H1 (cell line): ENCODE measurements at regions of chr19 and their contacts with region 1.

Region 1: GRCh38 chr19:18878858-18879578 is 16.9 kb downstream of the CERS1 start:
- DNase-seq: no peak
- H3K4me3 ChIP-seq: no peak overlapping the region
- H3K27ac ChIP-seq: no peak overlapping the region
- H3K4me1 ChIP-seq: no peaks in the 10 kb centered on the region; a peak in 4 of 7 replicates
- H3K27me3 ChIP-seq: no peaks in the 10 kb centered on the region; a peak in 1 of 7 replicates
- CTCF ChIP-seq: no peak
- EP300 ChIP-seq: no peak
- POLR2A ChIP-seq: no peak
- RAD21 ChIP-seq: no peak

Region 2: GRCh38 chr19:18865973-18866799 is 12.8 kb before region 1 on chr19:
- CTCF ChIA-PET with region 1: interaction called, 16 read pairs
- POLR2A ChIA-PET with region 1: interaction called, 4 read pairs
- DNase-seq: peak in 1 of 2 experiments; percentile 96
- H3K4me3 ChIP-seq: no peak overlapping the region
- H3K27ac ChIP-seq: peak overlapping the region; percentile 35; the same call in 1 of the 2 replicates
- H3K4me1 ChIP-seq: peaks cover 0 to 13% (median 4%) of the 10 kb centered on the region in 4 experiments; a peak in 4 of 7 replicates
- H3K27me3 ChIP-seq: peaks cover 0 to 2% (median 0%) of the 10 kb centered on the region in 4 experiments; a peak in 1 of 7 replicates
- CTCF ChIP-seq: peak; percentile 92 to 99 (median 96)
- EP300 ChIP-seq: no peak
- POLR2A ChIP-seq: no peak
- RAD21 ChIP-seq: peak; percentile 60 to 73